A549 (cell line): ENCODE measurements at regions of chr11 and their contacts with region 1.

Region 1: GRCh38 chr11:74929431-74930363 is 19.2 kb downstream of the XRRA1 start:
- DNase-seq: peak; percentile 60 to 91
- ATAC-seq: peak; percentile 97 to 99
- H3K4me3 ChIP-seq: no peak overlapping the region
- H3K27ac ChIP-seq: no peak overlapping the region
- H3K4me1 ChIP-seq: peaks cover 9% of the 10 kb centered on the region; the same call in 2 of the 3 replicates
- CTCF ChIP-seq: peak; percentile 92
- EP300 ChIP-seq: no peak
- POLR2A ChIP-seq: no peak
- RAD21 ChIP-seq: peak; percentile 81 to 90

Region 2: GRCh38 chr11:74896311-74896710 is 33.4 kb before region 1 on chr11:
- CTCF ChIA-PET with region 1: no interaction called
- POLR2A ChIA-PET with region 1: no interaction called
- DNase-seq: no peak
- ATAC-seq: no peak
- H3K4me3 ChIP-seq: no peak overlapping the region
- H3K27ac ChIP-seq: no peak overlapping the region
- H3K4me1 ChIP-seq: no peaks in the 10 kb centered on the region
- CTCF ChIP-seq: no peak
- EP300 ChIP-seq: no peak
- POLR2A ChIP-seq: no peak
- RAD21 ChIP-seq: no peak

Region 3: GRCh38 chr11:74980634-74981033 is 50.9 kb after region 1 on chr11:
- CTCF ChIA-PET with region 1: interaction called, 10 read pairs
- POLR2A ChIA-PET with region 1: no interaction called
- DNase-seq: no peak
- ATAC-seq: no peak
- H3K4me3 ChIP-seq: no peak overlapping the region
- H3K27ac ChIP-seq: no peak overlapping the region
- H3K4me1 ChIP-seq: no peaks in the 10 kb centered on the region
- CTCF ChIP-seq: no peak
- EP300 ChIP-seq: no peak
- POLR2A ChIP-seq: no peak
- RAD21 ChIP-seq: no peak

Region 4: DNA sequence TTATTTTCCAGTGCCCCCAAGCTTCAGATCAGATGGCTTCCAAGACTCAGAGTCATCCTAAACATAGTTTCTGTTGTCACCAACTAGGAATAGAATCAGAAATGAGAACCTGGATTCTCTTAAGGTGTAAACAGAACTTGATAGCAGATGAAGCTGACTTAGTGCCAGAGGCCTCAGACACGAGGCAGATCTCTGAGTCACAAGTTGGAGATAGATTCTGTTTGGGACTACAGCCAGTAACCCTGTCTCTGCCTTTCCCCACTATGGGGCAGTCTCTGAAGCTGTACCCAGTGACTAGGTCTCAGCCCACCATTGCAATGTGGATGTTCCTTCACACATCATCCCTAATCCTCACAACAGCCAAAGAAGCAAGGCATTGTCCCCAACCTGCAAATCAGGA is 84.4 kb after region 1 on chr11:
- CTCF ChIA-PET with region 1: interaction called, 21 read pairs
- POLR2A ChIA-PET with region 1: no interaction called
- DNase-seq: peak in 1 of 2 experiments; percentile 18
- ATAC-seq: peak; percentile 41 to 63; a peak in 2 of 6 replicates
- H3K4me3 ChIP-seq: no peak overlapping the region
- H3K27ac ChIP-seq: no peak overlapping the region
- H3K4me1 ChIP-seq: peaks cover 3% of the 10 kb centered on the region; the same call in 1 of the 3 replicates
- CTCF ChIP-seq: no peak
- EP300 ChIP-seq: no peak
- POLR2A ChIP-seq: no peak
- RAD21 ChIP-seq: no peak

Region 5: GRCh38 chr11:75031771-75032549 is 102.3 kb after region 1 on chr11:
- CTCF ChIA-PET with region 1: interaction called, 20 read pairs
- POLR2A ChIA-PET with region 1: no interaction called
- DNase-seq: peak; percentile 71
- ATAC-seq: peak; percentile 85 to 95
- H3K4me3 ChIP-seq: no peak overlapping the region
- H3K27ac ChIP-seq: peak overlapping the region in 1 of 2 experiments; percentile 63; a peak in 3 of 6 replicates
- H3K4me1 ChIP-seq: peaks cover 9% of the 10 kb centered on the region; the same call in 1 of the 3 replicates
- CTCF ChIP-seq: peak; percentile 67
- EP300 ChIP-seq: no peak
- POLR2A ChIP-seq: no peak
- RAD21 ChIP-seq: peak; percentile 53 to 66